ENCODE measurements at regions of chr22 and their contacts with region 1.

Region 1: DNA sequence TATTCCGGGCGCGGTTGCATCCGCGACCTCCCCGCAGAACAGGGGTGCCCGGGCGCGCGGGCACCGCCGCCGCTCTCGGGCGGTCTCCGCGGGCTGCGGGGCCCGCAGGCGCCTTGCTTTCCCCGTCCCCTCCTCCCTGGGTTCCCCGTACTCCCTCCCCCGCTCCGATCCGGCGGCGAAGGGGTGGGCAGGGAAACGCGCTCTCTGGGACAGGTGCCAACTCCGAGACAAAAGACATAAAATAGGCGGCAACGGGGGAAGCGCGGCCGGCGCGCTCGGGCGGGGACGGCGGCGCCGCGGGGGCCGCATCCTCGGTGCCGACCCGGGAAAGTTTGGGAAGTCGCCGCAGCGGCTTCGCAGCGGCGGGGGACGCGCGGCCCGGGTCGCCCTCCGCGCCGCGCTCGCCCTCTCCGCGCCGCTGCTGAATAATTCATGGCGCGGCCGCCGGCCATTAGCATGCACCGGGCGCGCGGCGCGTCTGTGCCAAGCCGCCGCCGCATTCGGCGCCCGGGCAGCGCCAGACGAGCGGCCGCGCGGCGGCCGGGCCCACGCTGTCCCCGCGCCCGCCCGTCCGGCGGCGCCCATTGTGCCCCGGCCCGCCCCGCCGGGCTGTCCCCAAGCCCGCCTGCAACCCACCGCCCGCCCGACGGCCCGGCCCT is 78.7 kb upstream of the PPARA start:
- DNase-seq: peak; percentile 53
- H3K4me3 ChIP-seq: peak overlapping the region; percentile 77
- CTCF ChIP-seq: no peak

Region 2: GRCh38 chr22:46054091-46055073 is 17.2 kb before region 1 on chr22:
- CTCF ChIA-PET with region 1: interaction called, 9 read pairs
- POLR2A ChIA-PET with region 1: interaction called, 32 read pairs
- DNase-seq: no peak
- H3K4me3 ChIP-seq: peak overlapping the region; percentile 66
- CTCF ChIP-seq: no peak

Region 3: GRCh38 chr22:46087336-46088277 is 16.0 kb after region 1 on chr22:
- CTCF ChIA-PET with region 1: interaction called, 11 read pairs
- POLR2A ChIA-PET with region 1: interaction called, 14 read pairs
- DNase-seq: no peak
- H3K4me3 ChIP-seq: peak overlapping the region; percentile 30
- CTCF ChIP-seq: no peak

Region 4: GRCh38 chr22:46619830-46620501 is 548.4 kb after region 1 on chr22 and contains the start of gene GRAMD4:
- CTCF ChIA-PET with region 1: no interaction called
- POLR2A ChIA-PET with region 1: no interaction called
- DNase-seq: no peak
- H3K4me3 ChIP-seq: no peak within 1 kb of the TSS
- CTCF ChIP-seq: no peak